ENCODE measurements at regions of chrX and their contacts with region 1.

Region 1: DNA sequence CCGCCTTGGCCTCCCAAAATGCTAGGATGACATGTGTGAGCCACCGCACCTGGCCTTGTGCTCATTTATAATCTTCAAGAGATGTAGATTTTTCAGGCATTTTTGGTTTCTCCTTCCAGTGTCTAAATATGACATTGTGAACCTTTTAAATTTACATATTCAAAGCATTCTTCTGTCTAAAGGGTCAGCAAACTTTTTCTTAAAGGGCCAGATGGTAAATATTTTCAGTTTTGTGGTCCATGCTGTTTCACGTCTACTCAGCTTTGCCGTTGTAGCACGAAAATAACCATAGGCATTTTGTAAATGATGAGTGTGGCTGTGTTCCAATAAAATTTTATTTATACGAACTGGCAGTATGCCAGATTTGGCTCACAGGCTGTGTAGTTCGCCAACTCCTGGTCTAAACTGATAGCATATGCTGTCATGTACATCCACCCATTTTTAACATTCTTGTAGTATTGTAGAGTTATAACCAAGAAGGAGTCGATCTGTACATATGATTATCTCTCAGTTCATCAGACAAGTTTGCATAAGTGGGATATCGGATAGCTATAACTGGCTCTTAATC is 12.7 kb upstream of the GCNA start:
- DNase-seq: no peak
- ATAC-seq: no peak
- H3K4me3 ChIP-seq: no peak overlapping the region
- H3K27ac ChIP-seq: no peak overlapping the region
- H3K4me1 ChIP-seq: no peaks in the 10 kb centered on the region
- H3K27me3 ChIP-seq: no peaks in the 10 kb centered on the region
- CTCF ChIP-seq: no peak

Region 2: DNA sequence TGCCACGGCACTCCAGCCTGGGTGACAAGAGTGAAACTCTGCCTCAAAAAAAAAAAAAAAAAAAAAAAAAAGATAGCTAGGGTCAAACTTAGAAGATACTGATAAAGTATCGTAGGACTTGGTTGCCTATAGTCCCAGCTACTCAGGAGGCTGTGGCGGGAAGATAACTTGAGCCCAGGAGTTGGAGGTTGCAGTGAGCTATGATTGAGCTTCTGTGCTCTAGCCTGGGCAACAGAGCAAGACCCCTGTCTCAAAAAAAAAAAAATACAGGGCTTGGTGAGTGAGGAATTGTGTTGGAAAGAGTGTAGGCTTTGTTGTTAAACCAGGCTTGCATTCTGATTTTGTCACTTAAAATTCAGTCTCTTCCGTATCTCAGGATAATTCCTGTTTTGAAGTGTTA is 193.2 kb before region 1 on chrX:
- intact Hi-C with region 1: no loop called
- DNase-seq: no peak
- ATAC-seq: no peak
- H3K4me3 ChIP-seq: no peak overlapping the region
- H3K27ac ChIP-seq: no peak overlapping the region
- H3K4me1 ChIP-seq: peaks cover 5% of the 10 kb centered on the region
- H3K27me3 ChIP-seq: no peaks in the 10 kb centered on the region
- CTCF ChIP-seq: no peak

Region 3: DNA sequence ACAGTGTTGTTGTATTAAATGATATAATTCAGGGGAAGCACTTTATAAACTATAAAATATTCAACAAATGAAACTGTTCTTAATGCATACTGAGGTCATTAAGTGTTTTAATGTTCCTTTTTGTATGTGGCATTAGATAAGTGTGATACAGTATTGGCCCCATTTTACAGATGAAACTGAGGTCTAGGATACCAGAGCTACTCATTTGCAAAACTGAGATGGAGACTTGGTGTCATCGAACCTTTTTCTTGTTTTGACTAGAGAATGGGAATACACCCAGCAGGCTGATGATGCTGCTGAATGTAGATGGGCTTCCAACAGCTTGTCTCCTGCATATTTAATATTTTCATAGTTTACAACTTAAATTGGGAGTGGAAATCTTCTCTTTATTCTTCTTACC is 164.8 kb before region 1 on chrX:
- intact Hi-C with region 1: loop called (anchors 10 kb)
- DNase-seq: no peak
- ATAC-seq: no peak
- H3K4me3 ChIP-seq: no peak overlapping the region
- H3K27ac ChIP-seq: no peak overlapping the region
- H3K4me1 ChIP-seq: no peaks in the 10 kb centered on the region
- H3K27me3 ChIP-seq: no peaks in the 10 kb centered on the region
- CTCF ChIP-seq: no peak